ENCODE measurements at regions of chr11 and their contacts with region 1.

Region 1: GRCh38 chr11:37320900-37321299 is 722.9 kb upstream of the RAG2 start:
- DNase-seq: peak; percentile 90
- ATAC-seq: peak; percentile 92
- H3K4me3 ChIP-seq: peak overlapping the region; percentile 16; the same call in 1 of the 2 replicates
- H3K27ac ChIP-seq: peak overlapping the region; percentile 64
- H3K4me1 ChIP-seq: peaks cover 25% of the 10 kb centered on the region
- H3K27me3 ChIP-seq: no peaks in the 10 kb centered on the region
- CTCF ChIP-seq: no peak

Region 2: DNA sequence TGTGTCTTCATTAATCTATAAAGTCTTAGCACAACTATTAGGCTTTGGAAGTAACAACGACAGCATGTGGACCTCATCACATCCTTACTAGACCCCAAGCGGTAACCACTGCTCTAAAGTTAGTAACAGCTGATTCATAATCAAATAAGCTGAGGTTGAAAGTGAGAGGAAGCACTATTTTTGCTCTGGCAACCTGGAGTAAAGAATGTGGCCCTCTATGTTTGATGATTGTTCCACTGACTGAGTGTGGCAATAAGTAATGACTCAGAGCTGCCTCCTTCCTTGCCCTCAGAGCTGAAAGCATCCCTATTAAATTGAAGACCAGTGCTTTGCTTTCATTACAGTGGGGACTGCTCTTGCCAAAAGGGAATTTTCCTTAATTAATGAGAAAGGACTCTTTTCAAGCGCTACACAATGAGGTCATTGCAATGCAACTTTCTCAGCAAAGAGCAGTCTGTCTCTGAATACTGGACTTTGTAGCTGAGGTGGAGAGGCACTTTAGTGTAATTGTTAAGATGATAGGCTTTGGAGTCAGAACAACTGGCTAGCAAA is 183.2 kb after region 1 on chr11:
- CTCF ChIA-PET with region 1: no interaction called
- POLR2A ChIA-PET with region 1: no interaction called
- intact Hi-C with region 1: loop called (anchors 5 kb)
- DNase-seq: peak; percentile 92
- ATAC-seq: peak; percentile 78
- H3K4me3 ChIP-seq: peak overlapping the region; percentile 57
- H3K27ac ChIP-seq: peak overlapping the region; percentile 100
- H3K4me1 ChIP-seq: peaks cover 65% of the 10 kb centered on the region
- H3K27me3 ChIP-seq: no peaks in the 10 kb centered on the region
- CTCF ChIP-seq: no peak

Measured in PC-3 (cell line).